ENCODE measurements at regions of chr4 and their contacts with region 1.

Region 1: GRCh38 chr4:80335554-80336358 is at the start of gene CFAP299:
- DNase-seq: peak; percentile 86 to 96 (median 90)
- ATAC-seq: peak; percentile 97
- H3K4me3 ChIP-seq: peak within 1 kb of the TSS; percentile 51
- H3K27ac ChIP-seq: peak within 1 kb of the TSS; percentile 52
- H3K4me1 ChIP-seq: peaks cover 5 to 9% of the 10 kb centered on the region in 2 experiments; a peak in 3 of 5 replicates
- H3K27me3 ChIP-seq: no peaks in the 10 kb centered on the region
- CTCF ChIP-seq: peak; percentile 67 to 81 (median 78)
- EP300 ChIP-seq: no peak
- POLR2A ChIP-seq: no peak
- RAD21 ChIP-seq: peak; percentile 73 to 77
- polyA plus RNA-seq, gene CFAP299: 0.69 to 0.78 TPM

Region 2: DNA sequence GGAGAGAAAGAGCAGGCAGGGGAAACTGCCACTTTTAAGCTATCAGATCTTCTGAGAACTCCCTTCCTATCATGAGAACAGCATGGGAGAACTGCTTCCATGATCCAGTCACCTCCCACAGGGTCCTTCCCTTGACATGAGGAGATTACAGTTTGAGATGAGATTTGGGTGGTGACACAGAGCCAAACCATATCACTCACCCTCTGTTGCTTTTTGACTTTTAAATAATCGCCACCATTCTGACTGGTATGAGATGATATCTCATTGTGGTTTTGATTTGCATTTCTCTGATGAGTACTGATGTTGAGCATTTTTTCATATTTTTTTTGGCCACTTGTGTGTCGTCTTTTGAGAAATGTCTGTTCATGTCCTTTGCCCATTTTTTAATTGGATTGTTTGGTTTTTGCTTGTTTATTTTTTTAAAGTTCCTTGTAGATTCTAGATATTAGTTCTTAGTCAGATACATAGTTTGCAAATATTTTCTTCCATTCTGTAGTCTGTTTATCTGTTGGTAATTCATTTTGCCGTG is 1390.0 kb before region 1 on chr4:
- CTCF ChIA-PET with region 1: no interaction called
- POLR2A ChIA-PET with region 1: no interaction called
- in situ Hi-C with region 1: loop called (anchors 5 kb)
- intact Hi-C with region 1: no loop called
- DNase-seq: no peak
- ATAC-seq: no peak; the same call in 2 of the 3 replicates
- H3K4me3 ChIP-seq: no peak overlapping the region
- H3K27ac ChIP-seq: no peak overlapping the region
- H3K4me1 ChIP-seq: no peaks in the 10 kb centered on the region; a peak in 1 of 5 replicates
- H3K27me3 ChIP-seq: no peaks in the 10 kb centered on the region
- CTCF ChIP-seq: no peak
- EP300 ChIP-seq: no peak
- POLR2A ChIP-seq: no peak
- RAD21 ChIP-seq: no peak

Region 3: GRCh38 chr4:79042079-79042674 is 1293.6 kb before region 1 on chr4:
- CTCF ChIA-PET with region 1: interaction called, 3 read pairs
- POLR2A ChIA-PET with region 1: no interaction called
- in situ Hi-C with region 1: no loop called
- intact Hi-C with region 1: loop called (anchors 5 kb)
- DNase-seq: peak; percentile 13 to 69 (median 38)
- ATAC-seq: peak; percentile 84
- H3K4me3 ChIP-seq: no peak overlapping the region
- H3K27ac ChIP-seq: no peak overlapping the region
- H3K4me1 ChIP-seq: peaks cover 0 to 8% of the 10 kb centered on the region in 2 experiments; a peak in 1 of 5 replicates
- H3K27me3 ChIP-seq: no peaks in the 10 kb centered on the region
- CTCF ChIP-seq: peak; percentile 57 to 75 (median 58); a peak in 4 of 6 replicates
- EP300 ChIP-seq: no peak
- POLR2A ChIP-seq: no peak
- RAD21 ChIP-seq: peak; percentile 82 to 91

Region 4: GRCh38 chr4:79576429-79576753 is 759.4 kb before region 1 on chr4:
- CTCF ChIA-PET with region 1: no interaction called
- POLR2A ChIA-PET with region 1: no interaction called
- in situ Hi-C with region 1: no loop called
- intact Hi-C with region 1: loop called (anchors 5 kb)
- DNase-seq: peak in 3 of 4 experiments; percentile 11 to 61 (median 27)
- ATAC-seq: peak; percentile 94
- H3K4me3 ChIP-seq: no peak overlapping the region
- H3K27ac ChIP-seq: no peak overlapping the region
- H3K4me1 ChIP-seq: no peaks in the 10 kb centered on the region; a peak in 2 of 5 replicates
- H3K27me3 ChIP-seq: no peaks in the 10 kb centered on the region
- CTCF ChIP-seq: peak; percentile 50 to 72 (median 62); a peak in 5 of 6 replicates
- EP300 ChIP-seq: no peak
- POLR2A ChIP-seq: no peak
- RAD21 ChIP-seq: peak; percentile 75 to 84

Region 5: GRCh38 chr4:79917246-79917645 is 418.5 kb before region 1 on chr4:
- CTCF ChIA-PET with region 1: no interaction called
- POLR2A ChIA-PET with region 1: no interaction called
- in situ Hi-C with region 1: no loop called
- intact Hi-C with region 1: loop called (anchors 10 kb)
- DNase-seq: peak; percentile 39 to 73 (median 44)
- ATAC-seq: peak; percentile 97
- H3K4me3 ChIP-seq: no peak overlapping the region
- H3K27ac ChIP-seq: no peak overlapping the region
- H3K4me1 ChIP-seq: no peaks in the 10 kb centered on the region
- H3K27me3 ChIP-seq: no peaks in the 10 kb centered on the region
- CTCF ChIP-seq: peak; percentile 55 to 63 (median 61)
- EP300 ChIP-seq: no peak
- POLR2A ChIP-seq: no peak
- RAD21 ChIP-seq: peak; percentile 17 to 45; a peak in 3 of 4 replicates

Region 6: DNA sequence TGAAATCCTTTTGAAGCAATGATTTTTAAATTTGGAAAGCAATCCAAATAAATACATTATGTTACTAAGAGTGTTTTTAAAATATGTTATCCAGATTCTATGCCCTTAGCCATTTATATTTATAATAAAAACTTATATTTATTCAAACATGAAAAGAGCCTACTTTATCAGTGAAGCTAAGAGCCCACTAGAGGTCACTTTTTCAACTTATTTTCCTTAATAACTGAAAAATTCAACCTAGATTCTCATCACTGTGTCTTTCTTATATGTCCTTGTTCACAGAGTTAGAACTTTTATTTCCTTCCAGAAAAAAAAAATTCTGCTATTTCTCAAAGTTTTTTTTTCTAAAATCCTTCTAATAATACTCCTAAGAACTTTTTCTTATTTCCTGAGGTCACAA is 114.6 kb before region 1 on chr4:
- CTCF ChIA-PET with region 1: interaction called, 3 read pairs
- POLR2A ChIA-PET with region 1: no interaction called
- in situ Hi-C with region 1: no loop called
- intact Hi-C with region 1: loop called (anchors 1 kb)
- DNase-seq: no peak
- ATAC-seq: peak; percentile 48; the same call in 2 of the 3 replicates
- H3K4me3 ChIP-seq: no peak overlapping the region
- H3K27ac ChIP-seq: no peak overlapping the region
- H3K4me1 ChIP-seq: peaks cover 0 to 6% of the 10 kb centered on the region in 2 experiments; a peak in 2 of 5 replicates
- H3K27me3 ChIP-seq: no peaks in the 10 kb centered on the region
- CTCF ChIP-seq: peak in 1 of 3 experiments; percentile 54; a peak in 2 of 6 replicates
- EP300 ChIP-seq: no peak
- POLR2A ChIP-seq: no peak
- RAD21 ChIP-seq: peak; percentile 39 to 54

Region 7: GRCh38 chr4:80286451-80286850 is 49.3 kb before region 1 on chr4:
- CTCF ChIA-PET with region 1: no interaction called
- POLR2A ChIA-PET with region 1: no interaction called
- in situ Hi-C with region 1: no loop called
- intact Hi-C with region 1: loop called (anchors 5 kb)
- DNase-seq: peak in 2 of 4 experiments; percentile 28 to 36
- ATAC-seq: peak; percentile 83
- H3K4me3 ChIP-seq: peak overlapping the region; percentile 19; the same call in 1 of the 2 replicates
- H3K27ac ChIP-seq: peak overlapping the region; percentile 72
- H3K4me1 ChIP-seq: peaks cover 0 to 6% of the 10 kb centered on the region in 2 experiments; a peak in 1 of 5 replicates
- H3K27me3 ChIP-seq: no peaks in the 10 kb centered on the region
- CTCF ChIP-seq: no peak
- EP300 ChIP-seq: no peak
- POLR2A ChIP-seq: no peak
- RAD21 ChIP-seq: no peak